Right ventricle myocardium inferior (tissue), 1 donor: ENCODE measurements at regions of chr19 and their contacts with region 1.

Region 1: DNA sequence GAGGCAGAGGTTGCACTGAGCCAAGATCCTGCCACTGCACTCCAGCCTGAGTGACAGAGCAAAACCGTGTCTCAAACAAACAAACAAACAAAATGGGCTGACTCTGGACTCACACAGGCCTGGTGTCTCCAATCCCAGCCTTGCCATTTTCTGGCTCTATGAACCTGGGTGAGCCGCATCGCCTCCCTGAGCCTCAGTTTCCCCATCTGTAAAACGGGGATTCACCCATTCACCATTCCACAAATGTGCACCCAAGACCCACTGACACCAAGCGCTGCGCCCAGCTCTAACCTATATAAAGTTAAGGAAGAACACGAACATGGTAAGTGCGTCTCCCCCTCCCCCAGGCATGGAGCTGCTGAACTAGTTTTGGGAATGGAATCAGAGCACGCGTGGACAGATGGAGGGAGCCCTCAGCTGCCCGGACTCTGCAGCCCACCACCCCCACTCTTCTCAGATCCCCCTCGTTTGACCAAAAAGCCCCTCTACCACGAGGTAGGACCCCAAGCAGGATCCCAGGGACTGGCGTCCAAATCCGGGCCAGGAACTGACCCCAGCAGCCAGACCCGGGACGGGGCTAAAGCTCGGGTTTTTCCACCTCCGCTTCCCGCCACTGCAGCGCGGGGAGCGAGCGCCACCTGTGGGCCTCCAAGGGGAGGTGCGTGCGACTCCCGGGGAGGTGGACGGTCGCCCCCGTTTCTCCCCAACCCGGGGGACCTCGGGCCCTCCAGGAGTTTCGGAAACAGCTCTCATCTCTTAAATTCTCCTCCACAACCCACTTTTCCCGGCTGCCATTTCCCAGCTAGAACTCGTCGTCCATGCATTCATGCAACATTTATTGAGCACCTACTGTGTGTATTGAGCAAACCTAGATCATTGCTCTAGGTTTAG is 33.0 kb upstream of the ADGRE5 start:
- DNase-seq: peak; percentile 86
- ATAC-seq: peak; percentile 86

Region 2: GRCh38 chr19:14203177-14203576 is 145.1 kb before region 1 on chr19:
- intact Hi-C with region 1: loop called (anchors 10 kb)
- DNase-seq: no peak
- ATAC-seq: no peak